ENCODE measurements at regions of chr20 and their contacts with region 1.

Region 1: DNA sequence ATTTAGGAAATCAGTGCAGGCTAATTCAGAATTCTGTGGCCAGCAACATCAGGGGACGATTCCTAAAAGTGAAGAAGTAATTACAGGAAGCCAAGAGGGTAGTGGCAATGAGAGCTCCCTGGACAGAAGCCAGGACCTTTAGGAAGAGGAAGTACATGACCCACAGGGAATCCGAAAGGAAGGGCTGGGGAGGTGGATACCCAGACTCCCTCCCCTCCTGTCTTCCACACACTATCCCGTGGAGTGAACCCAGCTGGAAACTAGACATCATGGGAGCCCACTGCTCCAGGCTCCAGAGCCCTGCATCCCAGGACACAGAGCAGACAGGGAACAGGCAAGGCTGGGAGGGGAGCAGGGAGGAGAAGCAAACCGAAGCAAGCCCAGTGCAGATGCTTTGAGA is 83.0 kb downstream of the SNX5 start:
- DNase-seq: no peak
- ATAC-seq: no peak
- H3K4me3 ChIP-seq: no peak overlapping the region
- H3K27ac ChIP-seq: no peak overlapping the region
- H3K4me1 ChIP-seq: no peaks in the 10 kb centered on the region
- CTCF ChIP-seq: no peak
- EP300 ChIP-seq: no peak
- POLR2A ChIP-seq: no peak
- RAD21 ChIP-seq: no peak

Region 2: GRCh38 chr20:17624551-17625240 is 260.8 kb before region 1 on chr20:
- CTCF ChIA-PET with region 1: no interaction called
- POLR2A ChIA-PET with region 1: no interaction called
- DNase-seq: no peak
- ATAC-seq: no peak
- H3K4me3 ChIP-seq: no peak overlapping the region
- H3K27ac ChIP-seq: no peak overlapping the region
- H3K4me1 ChIP-seq: no peaks in the 10 kb centered on the region
- CTCF ChIP-seq: no peak
- EP300 ChIP-seq: no peak
- POLR2A ChIP-seq: no peak
- RAD21 ChIP-seq: no peak

Region 3: DNA sequence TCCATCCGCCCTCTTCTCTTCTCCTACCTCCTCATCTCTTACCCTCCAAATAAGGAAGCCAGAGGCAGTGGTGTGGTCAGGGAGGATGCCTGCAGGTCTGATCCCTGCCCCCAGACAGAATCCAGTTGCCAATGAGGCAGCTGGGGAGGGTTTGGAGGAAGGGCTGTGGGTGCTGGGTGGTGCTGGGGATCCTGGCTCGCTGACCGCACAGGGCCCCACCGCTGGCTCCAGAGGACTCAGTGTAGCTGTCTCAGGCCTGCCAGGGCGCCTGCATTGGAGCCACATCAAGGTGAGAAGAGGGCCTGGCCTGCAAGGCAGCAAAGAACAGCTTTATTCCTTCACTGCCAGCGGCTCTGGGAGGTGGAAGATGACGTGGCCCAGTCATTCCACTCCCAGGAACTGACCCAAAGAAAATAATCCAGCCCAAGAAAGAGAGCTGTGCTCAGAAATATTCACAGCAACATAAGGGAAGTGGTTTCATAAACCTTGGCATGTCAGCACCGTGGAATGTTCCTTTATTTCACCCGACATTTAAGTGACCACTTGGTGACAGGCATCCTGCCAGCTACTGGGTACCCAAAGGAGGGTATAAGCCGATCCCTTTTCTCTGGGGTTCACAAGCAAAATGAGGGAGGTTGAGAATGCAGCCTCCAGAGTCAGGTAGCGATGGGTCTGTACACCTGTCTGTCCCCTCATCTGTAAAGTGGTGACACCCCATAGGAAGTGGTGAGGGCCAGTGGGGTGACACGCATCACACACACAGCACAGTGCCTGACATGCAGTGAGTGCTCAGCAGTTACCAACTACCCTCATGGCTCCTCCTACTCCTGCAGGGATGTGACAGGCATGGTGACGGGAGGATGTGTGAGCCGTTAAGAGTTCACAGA is 42.1 kb before region 1 on chr20:
- CTCF ChIA-PET with region 1: no interaction called
- POLR2A ChIA-PET with region 1: no interaction called
- DNase-seq: no peak
- ATAC-seq: peak; percentile 12 to 42; a peak in 3 of 6 replicates
- H3K4me3 ChIP-seq: no peak overlapping the region
- H3K27ac ChIP-seq: peak overlapping the region in 1 of 2 experiments; percentile 13; a peak in 1 of 6 replicates
- H3K4me1 ChIP-seq: no peaks in the 10 kb centered on the region
- CTCF ChIP-seq: no peak
- EP300 ChIP-seq: no peak
- POLR2A ChIP-seq: no peak
- RAD21 ChIP-seq: no peak

Region 4: GRCh38 chr20:17854307-17854903 is 31.1 kb before region 1 on chr20:
- CTCF ChIA-PET with region 1: no interaction called
- POLR2A ChIA-PET with region 1: no interaction called
- DNase-seq: peak; percentile 39 to 55
- ATAC-seq: peak; percentile 75 to 90
- H3K4me3 ChIP-seq: no peak overlapping the region
- H3K27ac ChIP-seq: no peak overlapping the region
- H3K4me1 ChIP-seq: no peaks in the 10 kb centered on the region
- CTCF ChIP-seq: no peak
- EP300 ChIP-seq: no peak
- POLR2A ChIP-seq: no peak
- RAD21 ChIP-seq: no peak

Region 5: GRCh38 chr20:17898548-17898994 is 13.0 kb after region 1 on chr20:
- CTCF ChIA-PET with region 1: interaction called, 11 read pairs
- POLR2A ChIA-PET with region 1: no interaction called
- DNase-seq: peak; percentile 73 to 88
- ATAC-seq: peak; percentile 69 to 82; a peak in 4 of 6 replicates
- H3K4me3 ChIP-seq: no peak overlapping the region
- H3K27ac ChIP-seq: no peak overlapping the region
- H3K4me1 ChIP-seq: peaks cover 8% of the 10 kb centered on the region; the same call in 2 of the 3 replicates
- CTCF ChIP-seq: peak; percentile 95
- EP300 ChIP-seq: no peak
- POLR2A ChIP-seq: no peak
- RAD21 ChIP-seq: peak; percentile 96 to 97

Region 6: DNA sequence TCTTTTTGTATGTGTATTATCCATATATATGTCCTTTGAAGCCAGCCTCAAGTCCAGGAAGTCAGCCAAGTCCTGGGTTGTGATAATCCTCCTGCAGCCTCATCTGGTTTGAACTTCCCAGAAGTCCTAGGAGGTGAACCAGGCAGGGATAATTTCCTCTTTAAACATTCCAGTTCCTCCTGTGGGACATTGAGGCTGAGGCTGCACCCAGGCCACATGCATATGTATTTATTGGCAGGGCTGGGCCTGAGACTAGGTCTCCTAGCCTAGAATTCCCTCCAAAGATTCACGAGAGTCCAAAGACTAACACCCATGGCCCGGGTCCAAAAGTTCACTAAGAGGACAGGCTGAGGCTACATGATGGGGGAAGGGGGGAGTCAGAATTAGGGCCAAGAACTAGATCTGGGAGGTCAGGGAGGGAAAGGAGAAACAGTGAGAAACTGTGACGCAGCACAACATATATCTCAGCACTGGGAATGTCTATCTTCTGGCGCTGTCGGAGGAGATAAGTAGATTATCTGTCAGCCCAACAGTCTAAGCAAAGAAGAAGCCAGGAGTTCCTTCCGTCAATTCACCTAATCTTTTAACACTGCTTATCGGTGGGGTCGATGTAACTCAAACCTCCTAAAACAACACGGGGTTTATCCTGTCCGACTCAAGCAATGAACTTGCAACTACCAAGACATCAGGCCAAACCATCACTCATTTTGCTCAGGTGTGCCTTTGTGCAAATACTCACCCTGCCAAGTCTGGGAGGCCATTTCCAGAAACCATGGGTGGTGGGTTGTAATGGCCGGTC is 39.8 kb after region 1 on chr20:
- CTCF ChIA-PET with region 1: no interaction called
- POLR2A ChIA-PET with region 1: no interaction called
- DNase-seq: no peak
- ATAC-seq: no peak
- H3K4me3 ChIP-seq: no peak overlapping the region
- H3K27ac ChIP-seq: no peak overlapping the region
- H3K4me1 ChIP-seq: no peaks in the 10 kb centered on the region
- CTCF ChIP-seq: no peak
- EP300 ChIP-seq: no peak
- POLR2A ChIP-seq: no peak
- RAD21 ChIP-seq: no peak